Esophagus muscularis mucosa (tissue), 4 donors: ENCODE measurements at regions of chr19 and their contacts with region 1.

Region 1: DNA sequence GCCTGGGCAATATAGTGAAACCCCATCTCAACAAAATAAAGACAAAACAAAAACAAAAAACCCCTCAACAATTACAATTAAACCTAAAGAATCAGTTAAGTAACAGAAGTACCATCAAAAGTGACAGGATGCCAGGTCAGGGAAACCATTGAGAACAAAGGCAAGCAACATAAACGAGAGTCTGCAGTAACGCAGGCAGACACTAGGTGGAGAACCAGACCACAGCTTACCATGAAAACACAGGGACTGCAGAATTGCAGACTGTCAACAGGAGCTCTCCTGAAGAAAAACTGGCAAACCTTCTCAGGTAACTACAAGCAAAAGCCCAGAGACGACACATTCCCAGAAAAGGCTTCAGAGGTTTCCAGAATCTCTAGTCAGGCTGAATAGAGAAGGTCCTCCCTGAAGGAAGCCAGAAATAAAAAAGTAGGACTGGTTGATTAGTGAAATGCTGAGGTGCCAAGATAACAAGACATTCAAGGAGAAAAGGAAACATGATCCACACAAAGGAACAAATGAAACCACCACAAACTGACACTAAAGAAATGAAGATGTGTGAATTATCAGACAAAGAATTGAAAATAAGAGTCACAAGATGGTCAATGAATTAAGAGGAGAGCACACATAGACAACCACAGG is 2.2 kb upstream of the ZNF665 start:
- DNase-seq: peak; percentile 95
- H3K4me3 ChIP-seq: no peak overlapping the region
- H3K27ac ChIP-seq: peak overlapping the region in 2 of 4 donors; percentile 12 to 93
- H3K4me1 ChIP-seq: peaks cover 11 to 38% (median 28%) of the 10 kb centered on the region in 4 donors
- H3K27me3 ChIP-seq: no peaks in the 10 kb centered on the region
- CTCF ChIP-seq: peak; percentile 91 to 97 (median 95)
- EP300 ChIP-seq: no peak
- POLR2A ChIP-seq: no peak

Region 2: GRCh38 chr19:53254411-53255341 is 59.3 kb after region 1 on chr19 and contains the start of gene ZNF677:
- intact Hi-C with region 1: loop called (anchors 5 kb)
- DNase-seq: peak; percentile 96
- H3K4me3 ChIP-seq: peak within 1 kb of the TSS; percentile 67 to 92 (median 80)
- H3K27ac ChIP-seq: peak within 1 kb of the TSS; percentile 82 to 87 (median 84)
- H3K4me1 ChIP-seq: peaks cover 9 to 25% (median 13%) of the 10 kb centered on the region in 4 donors
- H3K27me3 ChIP-seq: no peaks in the 10 kb centered on the region
- CTCF ChIP-seq: no peak
- EP300 ChIP-seq: no peak
- POLR2A ChIP-seq: no peak
- total RNA-seq, gene ZNF677: 15.6 to 22.0 (median 17.1) TPM

Region 3: DNA sequence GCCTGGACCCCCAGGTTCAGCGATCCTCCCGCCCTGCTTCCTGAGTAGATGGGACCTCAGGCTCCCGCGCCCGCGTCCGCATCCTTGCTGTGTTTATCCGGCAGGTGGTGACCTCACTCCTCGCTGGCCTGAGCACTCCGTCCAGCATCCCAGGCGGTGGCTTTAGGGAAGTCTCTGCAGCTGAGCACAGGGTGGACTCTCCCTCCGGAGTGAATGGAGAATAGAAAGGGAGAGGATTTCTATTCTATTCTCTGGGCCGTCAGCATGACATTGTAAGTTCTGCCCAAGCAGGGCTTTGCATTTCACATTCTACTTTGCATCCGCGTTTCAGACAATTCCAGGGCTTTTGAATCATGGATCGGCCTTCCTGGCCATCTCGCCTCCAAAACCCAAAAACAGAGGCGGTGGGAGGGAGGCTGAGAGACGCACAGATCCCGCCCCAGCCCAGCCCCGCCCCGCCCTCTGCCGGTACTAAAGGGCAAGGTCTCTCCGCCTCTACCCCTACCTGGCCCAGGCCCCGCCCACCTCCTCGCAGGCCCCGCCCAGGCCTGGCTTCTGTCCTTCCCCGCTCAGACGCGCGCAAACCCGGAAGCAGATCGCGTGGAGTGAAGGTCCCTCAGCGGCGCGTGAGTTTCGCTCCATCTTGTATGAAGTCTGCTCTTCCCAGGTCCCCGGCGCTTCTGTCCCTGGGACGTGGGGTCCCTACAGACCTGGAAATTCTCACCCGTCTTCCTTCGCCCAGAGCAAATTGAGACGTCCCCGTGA is 169.9 kb after region 1 on chr19 and contains the start of gene ZNF525:
- intact Hi-C with region 1: loop called (anchors 5 kb)
- DNase-seq: peak; percentile 97
- H3K4me3 ChIP-seq: peak within 1 kb of the TSS; percentile 59 to 80 (median 76)
- H3K27ac ChIP-seq: peak within 1 kb of the TSS; percentile 77 to 84 (median 81)
- H3K4me1 ChIP-seq: peaks cover 7 to 20% (median 14%) of the 10 kb centered on the region in 4 donors
- H3K27me3 ChIP-seq: no peaks in the 10 kb centered on the region
- CTCF ChIP-seq: peak in 2 of 3 experiments; percentile 18 to 30
- EP300 ChIP-seq: no peak
- POLR2A ChIP-seq: no peak
- total RNA-seq, gene ZNF525: 9.6 to 14.5 (median 12.3) TPM

Region 4: DNA sequence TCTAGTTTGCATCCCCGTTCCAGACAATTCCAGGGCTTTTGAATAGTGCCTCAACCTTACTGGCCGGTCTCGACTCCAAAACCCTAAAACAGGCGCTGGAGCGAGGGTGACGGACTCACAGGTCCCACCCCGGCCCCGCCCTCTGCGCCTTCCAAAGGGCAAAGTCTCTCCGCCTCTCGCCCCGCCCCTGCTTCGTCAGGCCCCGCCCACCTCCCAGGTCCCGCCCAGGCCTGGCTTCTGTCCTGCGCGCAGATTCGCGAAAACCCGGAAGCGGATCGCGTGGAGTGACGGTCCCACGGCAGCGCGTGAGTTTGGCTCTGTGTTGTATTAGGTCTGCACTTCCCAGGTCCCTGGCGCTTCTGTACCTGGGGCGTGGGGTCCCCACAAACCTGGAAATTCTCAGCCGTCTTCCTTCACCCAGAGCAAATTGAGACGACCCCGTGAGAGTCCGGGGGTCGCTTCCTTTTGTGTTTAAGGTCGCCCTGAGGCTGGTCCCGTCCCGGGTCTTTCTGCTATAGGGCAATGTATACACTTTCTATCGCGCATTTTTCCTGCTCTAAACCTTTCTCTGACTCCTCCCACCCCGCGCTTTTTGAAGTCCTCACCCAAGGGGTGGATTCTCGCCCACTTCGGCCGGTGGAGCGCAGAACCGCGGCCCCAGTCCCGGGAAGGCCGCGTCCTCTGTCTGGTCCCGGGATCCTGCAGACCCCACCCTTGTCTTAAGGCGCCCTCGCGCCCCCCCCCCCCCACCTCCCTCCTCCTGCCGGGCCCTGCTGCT is 272.3 kb after region 1 on chr19 and contains the start of gene ZNF813:
- intact Hi-C with region 1: loop called (anchors 10 kb)
- DNase-seq: peak; percentile 99
- H3K4me3 ChIP-seq: peak within 1 kb of the TSS; percentile 68 to 82 (median 72)
- H3K27ac ChIP-seq: peak within 1 kb of the TSS; percentile 70 to 84 (median 78)
- H3K4me1 ChIP-seq: peaks cover 11 to 29% (median 24%) of the 10 kb centered on the region in 4 donors
- H3K27me3 ChIP-seq: peaks cover 0 to 29% (median 0%) of the 10 kb centered on the region in 4 donors
- CTCF ChIP-seq: no peak
- EP300 ChIP-seq: no peak
- POLR2A ChIP-seq: peak; percentile 37
- total RNA-seq, gene ZNF813: 1.7 to 3.5 (median 3.2) TPM